Endothelial cell of umbilical vein (primary cell): ENCODE measurements at regions of chr16 and their contacts with region 1.

Region 1: DNA sequence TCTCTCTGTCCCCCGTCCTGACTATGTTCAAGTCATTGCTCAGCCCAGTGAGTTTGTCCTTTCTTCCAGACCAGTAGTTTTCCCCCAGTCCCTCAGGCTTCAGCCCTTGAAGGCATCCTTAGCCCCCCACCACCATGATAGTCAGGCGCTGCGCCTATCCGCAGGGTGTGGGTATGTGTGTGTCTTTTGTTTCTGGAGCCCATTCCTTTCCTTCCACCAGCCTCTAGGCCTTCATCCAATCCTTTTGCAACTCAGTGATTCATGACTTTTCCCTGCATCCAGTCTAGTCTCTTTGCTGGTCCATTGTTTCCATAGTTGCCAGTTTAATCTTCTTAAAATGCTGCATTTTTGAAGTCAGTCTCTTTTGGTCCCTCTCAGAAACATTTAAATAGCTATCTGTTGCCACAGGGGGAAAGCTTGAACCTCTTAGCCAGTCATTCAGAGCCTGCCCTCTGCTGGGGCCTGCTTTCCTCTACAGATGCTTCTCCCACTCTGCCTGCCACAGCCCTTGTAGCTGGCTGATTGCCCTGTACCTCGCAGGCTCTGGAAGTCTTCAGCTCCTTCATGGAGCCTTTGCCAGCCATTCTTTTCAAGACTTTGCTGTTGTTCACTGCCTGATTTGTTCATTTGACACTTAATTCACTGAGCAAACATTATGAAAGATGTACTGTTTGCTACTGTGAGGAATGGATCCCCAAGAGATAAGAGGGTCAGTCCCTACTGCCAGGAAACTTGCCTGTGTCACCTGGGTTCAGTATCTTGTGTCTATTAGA is 55.9 kb upstream of the ADCY7 start:
- DNase-seq: peak; percentile 86
- H3K4me3 ChIP-seq: no peak overlapping the region
- H3K27ac ChIP-seq: no peak overlapping the region
- H3K4me1 ChIP-seq: peaks cover 22% of the 10 kb centered on the region
- H3K27me3 ChIP-seq: no peaks in the 10 kb centered on the region
- CTCF ChIP-seq: peak; percentile 71 to 80
- POLR2A ChIP-seq: no peak

Region 2: DNA sequence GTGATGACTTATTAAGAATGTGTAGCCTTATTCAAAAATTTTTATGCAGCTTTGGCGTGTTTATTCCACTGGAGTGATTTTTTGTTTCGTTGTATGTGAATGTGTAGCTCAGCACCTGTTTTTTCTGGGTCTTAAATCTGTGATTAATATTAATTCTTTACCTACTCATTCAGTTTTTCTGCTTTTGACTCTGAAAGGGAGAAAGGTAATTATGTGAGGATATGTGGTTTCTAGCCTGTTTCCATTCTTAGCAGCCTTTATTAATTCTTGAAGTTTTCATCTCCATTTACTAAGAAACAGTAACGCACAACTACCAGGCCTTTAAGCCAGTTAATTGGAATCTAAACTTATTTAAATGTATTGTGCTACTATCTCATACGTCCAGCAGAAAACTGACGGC is 137.7 kb before region 1 on chr16:
- CTCF ChIA-PET with region 1: interaction called, 193 read pairs
- POLR2A ChIA-PET with region 1: no interaction called
- dilution Hi-C with region 1: no loop called
- intact Hi-C with region 1: loop called (anchors 1 kb)
- DNase-seq: no peak
- H3K4me3 ChIP-seq: no peak overlapping the region
- H3K27ac ChIP-seq: no peak overlapping the region
- H3K4me1 ChIP-seq: peaks cover 11% of the 10 kb centered on the region
- H3K27me3 ChIP-seq: no peaks in the 10 kb centered on the region
- CTCF ChIP-seq: no peak
- POLR2A ChIP-seq: no peak

Region 3: GRCh38 chr16:50136399-50136798 is 74.1 kb before region 1 on chr16:
- CTCF ChIA-PET with region 1: interaction called, 66 read pairs
- POLR2A ChIA-PET with region 1: no interaction called
- dilution Hi-C with region 1: no loop called
- intact Hi-C with region 1: no loop called
- DNase-seq: no peak
- H3K4me3 ChIP-seq: no peak overlapping the region
- H3K27ac ChIP-seq: no peak overlapping the region
- H3K4me1 ChIP-seq: no peaks in the 10 kb centered on the region
- H3K27me3 ChIP-seq: no peaks in the 10 kb centered on the region
- CTCF ChIP-seq: peak in 1 of 2 donors; percentile 2
- POLR2A ChIP-seq: no peak

Region 4: GRCh38 chr16:50166511-50167500 is 43.6 kb before region 1 on chr16:
- CTCF ChIA-PET with region 1: interaction called, 32 read pairs
- POLR2A ChIA-PET with region 1: no interaction called
- dilution Hi-C with region 1: no loop called
- intact Hi-C with region 1: no loop called
- DNase-seq: peak; percentile 47
- H3K4me3 ChIP-seq: no peak overlapping the region
- H3K27ac ChIP-seq: peak overlapping the region; percentile 57
- H3K4me1 ChIP-seq: peaks cover 14% of the 10 kb centered on the region
- H3K27me3 ChIP-seq: no peaks in the 10 kb centered on the region
- CTCF ChIP-seq: no peak
- POLR2A ChIP-seq: no peak

Region 5: DNA sequence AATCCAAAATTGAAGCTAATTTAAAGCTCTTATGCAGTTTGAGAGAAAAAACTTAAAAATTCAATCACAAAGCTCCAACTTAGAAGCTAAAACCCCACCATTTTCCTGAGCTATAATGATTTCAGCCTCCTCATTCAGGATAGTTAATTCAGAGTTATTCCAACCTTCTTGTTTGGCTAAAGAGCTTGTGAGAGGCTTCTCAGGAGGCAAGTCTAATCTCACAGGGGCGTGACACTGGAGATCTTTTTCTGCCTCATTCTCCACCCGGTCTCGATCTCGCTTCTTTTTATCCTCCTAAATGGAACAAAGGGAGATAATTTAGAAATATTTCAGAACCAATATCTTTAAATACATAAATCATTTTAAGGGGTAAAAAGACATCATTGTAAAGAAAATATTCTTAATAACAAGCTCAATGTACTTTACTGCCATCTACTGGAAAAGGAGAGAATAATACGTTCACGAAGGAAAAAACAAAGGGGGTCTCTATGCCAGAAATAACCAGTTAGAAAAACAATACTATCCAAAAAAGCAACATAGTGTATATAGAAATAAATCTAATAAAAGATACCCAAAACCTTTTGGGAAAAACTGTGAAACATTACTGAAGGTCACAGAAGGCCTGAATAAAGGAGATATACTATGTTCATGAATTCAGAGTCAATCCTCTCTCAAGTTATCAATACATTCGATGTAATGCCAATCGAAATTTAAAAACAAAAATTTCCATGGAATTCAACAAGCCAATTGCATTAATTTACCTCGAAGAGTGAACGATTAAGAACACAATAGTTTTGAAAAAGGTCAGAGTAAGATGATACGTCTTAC is 144.4 kb after region 1 on chr16:
- CTCF ChIA-PET with region 1: interaction called, 106 read pairs
- POLR2A ChIA-PET with region 1: no interaction called
- dilution Hi-C with region 1: no loop called
- intact Hi-C with region 1: loop called (anchors 1 kb)
- DNase-seq: peak; percentile 33
- H3K4me3 ChIP-seq: no peak overlapping the region
- H3K27ac ChIP-seq: no peak overlapping the region
- H3K4me1 ChIP-seq: no peaks in the 10 kb centered on the region
- H3K27me3 ChIP-seq: no peaks in the 10 kb centered on the region
- CTCF ChIP-seq: peak; percentile 25 to 37
- POLR2A ChIP-seq: no peak